ENCODE measurements at regions of chr2 and their contacts with region 1.

Region 1: GRCh38 chr2:47906157-47907038 is at the start of gene FBXO11:
- DNase-seq: peak; percentile 99
- H3K4me3 ChIP-seq: peak within 1 kb of the TSS; percentile 77
- H3K27ac ChIP-seq: peak within 1 kb of the TSS; percentile 86
- H3K4me1 ChIP-seq: peaks cover 33% of the 10 kb centered on the region
- H3K27me3 ChIP-seq: no peaks in the 10 kb centered on the region
- CTCF ChIP-seq: 0 out of 2 replicates have a peak, but pooled peaks have one; percentile 78
- total RNA-seq, gene FBXO11: 49.3 and 49.4 TPM in 2 replicates

Region 2: DNA sequence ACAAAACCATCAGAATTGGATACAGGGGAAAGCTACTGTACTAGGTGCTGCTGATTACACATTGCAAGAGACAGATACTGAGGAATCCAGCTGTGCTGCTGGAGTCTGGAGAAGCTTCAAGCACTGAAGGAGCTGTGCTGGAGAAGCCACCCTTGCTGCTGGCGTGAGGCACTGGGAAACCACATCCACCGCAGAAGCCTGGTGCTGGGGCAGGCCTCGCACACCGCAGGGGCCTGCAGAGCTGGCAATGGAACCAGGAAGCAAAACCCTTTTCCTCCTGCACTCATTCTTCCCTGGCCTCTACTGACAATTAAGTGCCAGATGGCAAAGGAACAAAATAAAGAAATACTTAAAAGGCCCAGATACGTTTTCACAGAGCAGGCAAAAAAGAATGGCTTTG is 217.8 kb before region 1 on chr2:
- CTCF ChIA-PET with region 1: no interaction called
- POLR2A ChIA-PET with region 1: no interaction called
- intact Hi-C with region 1: no loop called
- DNase-seq: peak in 1 of 2 experiments; percentile 28
- H3K4me3 ChIP-seq: no peak overlapping the region
- H3K27ac ChIP-seq: no peak overlapping the region
- H3K4me1 ChIP-seq: no peaks in the 10 kb centered on the region
- H3K27me3 ChIP-seq: no peaks in the 10 kb centered on the region
- CTCF ChIP-seq: no peak

Region 3: GRCh38 chr2:47782671-47783485 is 123.5 kb before region 1 on chr2 and contains the start of gene MSH6:
- CTCF ChIA-PET with region 1: no interaction called
- POLR2A ChIA-PET with region 1: interaction called, 16 read pairs
- intact Hi-C with region 1: loop called (anchors 2 kb)
- DNase-seq: peak; percentile 76 to 94
- H3K4me3 ChIP-seq: peak within 1 kb of the TSS; percentile 97
- H3K27ac ChIP-seq: peak within 1 kb of the TSS; percentile 57
- H3K4me1 ChIP-seq: peaks cover 18% of the 10 kb centered on the region
- H3K27me3 ChIP-seq: no peaks in the 10 kb centered on the region
- CTCF ChIP-seq: no peak
- total RNA-seq, gene MSH6: 105 and 123 TPM in 2 replicates

Region 4: DNA sequence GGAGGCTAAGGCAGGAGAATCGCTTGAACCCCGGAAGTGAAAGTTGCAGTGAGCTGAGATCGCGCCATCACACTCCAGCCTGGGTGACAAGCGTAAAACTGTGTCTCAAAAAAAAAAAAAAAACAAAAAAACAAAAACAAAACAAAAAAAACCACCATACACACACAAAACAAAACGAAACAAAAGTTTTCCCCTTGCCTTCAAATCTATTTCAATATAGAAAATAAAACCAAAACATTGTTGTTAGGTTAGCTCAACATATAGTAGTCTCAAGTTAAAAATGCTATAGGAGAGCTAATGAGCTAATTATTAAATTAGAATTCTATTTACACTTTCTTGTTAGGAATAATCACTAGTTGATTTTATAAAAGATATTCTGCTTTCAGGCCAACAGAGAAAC is 43.4 kb before region 1 on chr2:
- CTCF ChIA-PET with region 1: interaction called, 17 read pairs
- POLR2A ChIA-PET with region 1: no interaction called
- intact Hi-C with region 1: no loop called
- DNase-seq: no peak
- H3K4me3 ChIP-seq: no peak overlapping the region
- H3K27ac ChIP-seq: no peak overlapping the region
- H3K4me1 ChIP-seq: no peaks in the 10 kb centered on the region
- H3K27me3 ChIP-seq: no peaks in the 10 kb centered on the region
- CTCF ChIP-seq: no peak

Region 5: GRCh38 chr2:48107326-48107925 is 201.0 kb after region 1 on chr2:
- CTCF ChIA-PET with region 1: interaction called, 4 read pairs
- POLR2A ChIA-PET with region 1: interaction called, 7 read pairs
- intact Hi-C with region 1: loop called (anchors 1 kb)
- DNase-seq: peak; percentile 64 to 73
- H3K4me3 ChIP-seq: no peak overlapping the region
- H3K27ac ChIP-seq: peak overlapping the region; percentile 71
- H3K4me1 ChIP-seq: peaks cover 53% of the 10 kb centered on the region
- H3K27me3 ChIP-seq: no peaks in the 10 kb centered on the region
- CTCF ChIP-seq: no peak